ENCODE measurements at regions of chr12 and their contacts with region 1.

Region 1: GRCh38 chr12:94649349-94650142 is 811 bp downstream of the TMCC3 start:
- DNase-seq: no peak
- H3K4me3 ChIP-seq: peak overlapping the region; percentile 64 to 91 (median 74)
- H3K27ac ChIP-seq: peak overlapping the region; percentile 75 to 81 (median 78)
- H3K4me1 ChIP-seq: peaks cover 6 to 46% (median 35%) of the 10 kb centered on the region in 4 donors
- H3K27me3 ChIP-seq: no peaks in the 10 kb centered on the region
- CTCF ChIP-seq: peak; percentile 36 to 62 (median 50)
- EP300 ChIP-seq: no peak
- POLR2A ChIP-seq: no peak

Region 2: DNA sequence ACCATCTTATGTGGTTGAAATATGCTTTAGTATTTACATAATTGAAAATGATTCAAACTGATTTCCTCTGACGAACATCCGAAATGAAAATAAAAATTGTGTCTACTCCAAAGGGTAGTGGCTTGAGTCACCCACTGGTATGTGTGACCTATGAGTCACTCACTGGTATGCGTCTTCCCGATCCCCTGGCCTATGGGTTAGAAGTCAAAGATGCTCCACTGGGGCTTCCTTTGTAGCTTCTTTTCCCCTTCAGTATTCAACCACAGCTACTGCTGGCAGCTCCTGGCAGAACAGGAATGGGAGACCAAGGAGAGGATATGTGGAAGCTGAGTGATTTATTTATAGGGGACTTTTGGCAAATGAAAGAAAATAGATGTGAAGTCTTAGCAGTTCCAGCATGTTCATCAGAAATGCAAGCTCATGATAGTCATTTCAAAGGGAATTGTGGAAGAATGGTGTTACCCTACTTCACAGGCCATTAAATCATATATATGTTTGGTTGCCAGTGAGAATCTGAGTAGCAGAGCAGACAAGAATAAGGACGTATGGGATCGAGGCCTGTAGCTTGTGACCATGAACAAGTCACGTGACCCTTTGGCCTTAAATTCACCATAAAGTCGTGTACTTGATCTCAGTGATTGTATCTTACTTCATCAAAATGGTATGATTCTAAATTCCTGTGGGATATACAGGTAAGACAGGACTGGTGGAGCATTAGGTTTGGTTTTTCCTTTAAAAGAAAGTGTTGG is 864.1 kb before region 1 on chr12:
- intact Hi-C with region 1: no loop called
- DNase-seq: no peak
- H3K4me3 ChIP-seq: peak overlapping the region in 3 of 4 donors; percentile 11 to 21 (median 11)
- H3K27ac ChIP-seq: peak overlapping the region; percentile 77 to 83 (median 80)
- H3K4me1 ChIP-seq: peaks cover 43 to 54% (median 48%) of the 10 kb centered on the region in 4 donors
- H3K27me3 ChIP-seq: no peaks in the 10 kb centered on the region
- CTCF ChIP-seq: no peak
- EP300 ChIP-seq: no peak
- POLR2A ChIP-seq: no peak

Region 3: DNA sequence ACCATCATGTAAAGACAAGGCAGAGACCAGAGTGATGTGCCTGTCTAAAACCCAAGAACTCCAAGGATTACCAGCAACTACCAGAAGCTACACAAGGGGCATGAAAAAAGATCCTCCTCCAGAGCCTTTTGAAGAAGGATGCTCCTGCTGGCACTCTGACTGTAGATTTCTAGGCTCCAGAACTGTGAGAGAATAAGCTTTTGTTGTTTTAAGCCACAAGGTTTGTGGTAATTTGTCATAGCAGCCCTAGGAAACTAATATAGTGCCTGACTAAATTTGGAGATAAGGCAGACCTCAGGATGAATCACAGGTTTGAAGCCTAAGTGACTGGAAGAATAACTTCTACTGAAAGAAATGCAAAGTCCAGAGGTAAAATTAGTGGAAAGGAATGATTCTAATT is 322.8 kb before region 1 on chr12:
- intact Hi-C with region 1: no loop called
- DNase-seq: no peak
- H3K4me3 ChIP-seq: no peak overlapping the region
- H3K27ac ChIP-seq: no peak overlapping the region
- H3K4me1 ChIP-seq: no peaks in the 10 kb centered on the region
- H3K27me3 ChIP-seq: no peaks in the 10 kb centered on the region
- CTCF ChIP-seq: no peak
- EP300 ChIP-seq: no peak
- POLR2A ChIP-seq: no peak

Region 4: DNA sequence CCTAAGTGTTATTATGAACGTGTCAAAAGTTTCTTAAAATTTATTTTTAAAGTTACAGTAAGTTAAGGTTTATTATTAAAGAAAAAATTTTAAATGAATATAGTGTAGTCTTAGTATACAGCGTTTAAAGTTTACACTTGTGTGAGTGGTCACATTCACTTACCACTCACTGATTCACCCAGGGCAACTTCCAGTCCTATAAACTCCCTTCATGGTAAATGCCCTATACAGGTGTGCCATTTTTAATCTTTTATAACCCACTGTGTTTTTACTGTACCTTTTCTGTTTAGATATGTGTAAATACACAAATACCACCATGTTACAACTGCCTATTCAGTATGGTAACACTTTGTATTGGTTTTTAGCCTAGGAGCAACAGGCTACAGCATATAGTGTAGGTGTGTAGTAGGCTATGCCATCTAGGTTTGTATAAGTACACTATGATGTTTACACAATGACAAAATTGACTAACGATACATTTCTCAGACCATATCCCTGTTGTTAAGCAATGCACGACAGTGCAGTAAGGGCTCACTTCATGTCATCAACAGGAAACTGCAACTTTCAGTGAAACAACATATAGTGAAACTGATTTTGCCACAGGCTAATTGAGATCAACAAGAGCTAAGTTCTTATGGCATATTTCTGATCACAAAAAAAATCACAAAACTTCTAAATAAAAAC is 112.9 kb after region 1 on chr12:
- intact Hi-C with region 1: loop called (anchors 10 kb)
- DNase-seq: no peak
- H3K4me3 ChIP-seq: no peak overlapping the region
- H3K27ac ChIP-seq: no peak overlapping the region
- H3K4me1 ChIP-seq: peaks cover 0 to 31% (median 11%) of the 10 kb centered on the region in 4 donors
- H3K27me3 ChIP-seq: no peaks in the 10 kb centered on the region
- CTCF ChIP-seq: no peak
- EP300 ChIP-seq: no peak
- POLR2A ChIP-seq: no peak